ENCODE measurements at regions of chr5 and their contacts with region 1.

Region 1: DNA sequence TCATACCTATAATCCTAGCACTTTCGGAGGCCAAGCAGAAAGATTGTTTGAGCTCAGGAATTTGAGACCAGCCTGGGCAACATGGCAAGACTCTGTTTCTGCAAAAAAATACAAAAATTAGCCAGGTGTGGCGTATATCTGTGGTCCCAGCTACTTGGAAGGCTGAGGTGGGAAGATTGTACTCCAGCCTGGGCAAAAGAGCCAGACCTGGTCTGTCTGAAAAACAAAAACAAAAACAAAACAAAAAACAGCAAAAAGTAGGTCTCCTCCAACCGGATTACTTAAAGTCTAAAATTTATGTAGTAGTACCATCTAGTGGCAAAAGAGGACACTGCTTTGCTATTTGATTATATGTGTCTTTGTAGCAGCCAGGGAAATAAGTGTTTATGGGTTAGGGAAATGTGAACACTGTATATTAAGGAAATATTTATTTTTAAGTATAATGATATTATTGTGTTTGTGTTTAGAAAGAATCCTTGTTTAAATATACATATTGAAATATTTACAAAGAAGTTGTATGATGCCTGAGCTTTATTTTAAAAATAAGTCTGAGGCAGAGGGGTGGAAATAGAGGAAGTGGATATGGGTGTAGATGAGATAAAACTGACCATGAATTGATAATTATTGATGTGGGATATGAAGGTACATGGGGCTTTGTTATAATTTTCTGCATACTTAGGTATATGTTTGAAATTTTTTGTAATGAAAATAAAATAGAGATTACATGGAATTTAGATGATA is 20.0 kb downstream of the APC start:
- DNase-seq: no peak
- H3K4me3 ChIP-seq: peak overlapping the region in 1 of 2 donors; percentile 21
- H3K27ac ChIP-seq: peak overlapping the region; percentile 48 to 58
- H3K4me1 ChIP-seq: peaks cover 0 to 19% (median 2%) of the 10 kb centered on the region in 4 donors
- H3K27me3 ChIP-seq: no peaks in the 10 kb centered on the region
- CTCF ChIP-seq: peak; percentile 81

Region 2: GRCh38 chr5:112407667-112408403 is 349.8 kb before region 1 on chr5:
- intact Hi-C with region 1: no loop called
- DNase-seq: no peak
- H3K4me3 ChIP-seq: no peak overlapping the region
- H3K27ac ChIP-seq: no peak overlapping the region
- H3K4me1 ChIP-seq: peaks cover 0 to 3% (median 0%) of the 10 kb centered on the region in 4 donors
- H3K27me3 ChIP-seq: no peaks in the 10 kb centered on the region
- CTCF ChIP-seq: no peak

Region 3: GRCh38 chr5:112551419-112552032 is 206.1 kb before region 1 on chr5:
- intact Hi-C with region 1: loop called (anchors 5 kb)
- DNase-seq: peak in 1 of 2 donors; percentile 42
- H3K4me3 ChIP-seq: no peak overlapping the region
- H3K27ac ChIP-seq: no peak overlapping the region
- H3K4me1 ChIP-seq: peaks cover 0 to 23% (median 3%) of the 10 kb centered on the region in 4 donors
- H3K27me3 ChIP-seq: no peaks in the 10 kb centered on the region
- CTCF ChIP-seq: peak; percentile 73 to 80